ENCODE measurements at regions of chr10 and their contacts with region 1.

Region 1: DNA sequence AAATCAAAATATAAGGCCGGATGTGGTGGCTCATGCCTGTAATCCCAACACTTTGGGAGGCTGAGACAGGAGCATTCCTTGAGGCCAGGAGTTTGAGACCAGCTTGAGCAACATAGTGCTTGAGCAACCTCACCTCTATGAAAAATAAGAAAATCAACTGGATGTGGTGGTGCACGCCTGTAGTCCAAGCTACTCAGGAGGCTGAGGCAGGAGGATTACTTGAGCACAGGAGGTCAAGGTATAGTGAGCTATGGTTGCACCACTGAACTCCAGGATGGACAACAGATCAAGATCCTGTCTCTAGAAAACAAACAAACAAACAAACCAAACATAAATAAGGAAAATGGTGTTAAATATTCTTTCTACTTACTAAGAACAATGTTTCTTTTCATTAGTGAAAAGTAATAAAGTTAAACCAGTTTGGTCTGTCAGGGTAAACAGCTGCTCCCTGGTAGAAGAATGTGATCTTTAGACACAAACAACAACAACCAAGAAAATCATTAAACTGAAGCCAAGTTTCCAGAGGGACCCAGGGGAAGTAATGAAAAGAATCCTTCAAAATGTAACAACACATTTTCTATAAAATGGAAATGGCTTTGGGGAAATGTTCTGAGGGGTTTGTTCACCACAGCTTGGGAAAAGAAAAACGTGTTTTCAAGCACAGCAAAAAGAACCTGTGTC is 17.5 kb upstream of the BAG3 start:
- DNase-seq: no peak
- ATAC-seq: no peak
- H3K4me3 ChIP-seq: no peak overlapping the region
- H3K4me3 Mint-ChIP-seq: no peak overlapping the region
- H3K27ac ChIP-seq: no peak overlapping the region
- H3K27ac Mint-ChIP-seq: no peak overlapping the region
- H3K4me1 ChIP-seq: no peaks in the 10 kb centered on the region
- H3K4me1 Mint-ChIP-seq: no peaks in the 10 kb centered on the region
- H3K27me3 ChIP-seq: peaks cover 0 to 2% of the 10 kb centered on the region in 2 experiments
- H3K27me3 Mint-ChIP-seq: peaks cover 0 to 1% of the 10 kb centered on the region in 2 donors

Region 2: GRCh38 chr10:119620241-119621077 is 13.2 kb before region 1 on chr10:
- CTCF ChIA-PET with region 1: no interaction called
- POLR2A ChIA-PET with region 1: interaction called in 1 of 2 experiments, 12 read pairs
- DNase-seq: no peak
- ATAC-seq: peak in 1 of 4 experiments; percentile 12
- H3K4me3 ChIP-seq: no peak overlapping the region
- H3K4me3 Mint-ChIP-seq: no peak overlapping the region
- H3K27ac ChIP-seq: no peak overlapping the region
- H3K27ac Mint-ChIP-seq: peak overlapping the region in 1 of 2 donors; percentile 23
- H3K4me1 ChIP-seq: no peaks in the 10 kb centered on the region
- H3K4me1 Mint-ChIP-seq: peaks cover 0 to 6% (median 4%) of the 10 kb centered on the region in 3 donors
- H3K27me3 ChIP-seq: no peaks in the 10 kb centered on the region
- H3K27me3 Mint-ChIP-seq: peaks cover 0 to 4% of the 10 kb centered on the region in 2 donors

Region 3: DNA sequence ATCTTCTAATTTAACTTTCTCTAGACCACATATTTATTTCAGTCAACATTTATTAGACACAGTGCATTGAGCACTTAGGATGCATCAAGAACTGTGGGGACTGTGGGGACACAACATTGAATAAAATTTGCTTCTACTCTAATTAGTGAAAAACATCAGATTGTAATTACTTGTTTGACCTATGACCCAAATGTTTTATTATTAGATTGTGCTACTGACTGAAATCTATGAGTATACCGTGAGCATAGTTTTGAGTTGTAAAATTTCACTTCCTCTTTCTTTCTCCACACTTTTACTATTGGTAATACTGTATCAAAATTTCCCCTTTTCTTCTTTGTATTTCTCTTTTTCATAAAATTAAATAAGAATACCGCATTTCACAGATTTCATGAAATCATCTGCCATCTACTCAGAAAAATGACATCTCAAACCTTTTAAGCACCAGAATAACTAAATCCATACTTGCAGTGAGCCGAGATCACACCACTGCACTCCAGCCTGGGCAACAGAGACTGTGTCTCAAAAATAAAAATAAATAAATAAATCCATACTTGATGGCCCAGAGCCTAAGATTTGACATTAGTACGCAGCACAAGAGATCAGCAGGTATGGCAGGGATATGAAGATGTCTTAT is 66.8 kb after region 1 on chr10:
- CTCF ChIA-PET with region 1: no interaction called
- POLR2A ChIA-PET with region 1: no interaction called
- DNase-seq: no peak
- ATAC-seq: no peak
- H3K4me3 ChIP-seq: no peak overlapping the region
- H3K4me3 Mint-ChIP-seq: no peak overlapping the region
- H3K27ac ChIP-seq: no peak overlapping the region
- H3K27ac Mint-ChIP-seq: no peak overlapping the region
- H3K4me1 ChIP-seq: peaks cover 0 to 4% of the 10 kb centered on the region in 2 experiments
- H3K4me1 Mint-ChIP-seq: peaks cover 10 to 28% (median 14%) of the 10 kb centered on the region in 3 donors
- H3K27me3 ChIP-seq: peaks cover 0 to 5% of the 10 kb centered on the region in 2 experiments
- H3K27me3 Mint-ChIP-seq: peaks cover 0 to 3% of the 10 kb centered on the region in 2 donors

Region 4: DNA sequence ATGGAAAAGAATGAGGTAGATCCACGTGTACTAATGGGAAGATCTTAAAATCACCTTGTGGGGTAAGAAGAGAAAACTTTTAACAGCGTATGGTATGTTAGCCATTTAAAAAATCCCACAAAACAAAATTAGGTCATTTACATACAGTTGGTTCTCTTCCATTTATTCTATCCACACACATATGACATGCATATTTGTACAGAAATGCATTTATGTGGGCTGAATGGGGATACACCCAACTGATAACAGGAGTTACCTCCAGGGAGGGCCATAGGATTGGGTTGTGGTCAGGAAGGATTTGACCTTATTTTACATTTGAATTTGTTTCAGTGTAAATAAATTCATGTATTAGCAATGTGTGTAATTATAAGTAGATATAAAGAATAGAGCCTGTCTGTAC is 167.5 kb after region 1 on chr10:
- CTCF ChIA-PET with region 1: no interaction called
- POLR2A ChIA-PET with region 1: interaction called in 1 of 2 experiments, 10 read pairs
- DNase-seq: no peak
- ATAC-seq: no peak
- H3K4me3 ChIP-seq: no peak overlapping the region
- H3K4me3 Mint-ChIP-seq: no peak overlapping the region
- H3K27ac ChIP-seq: no peak overlapping the region
- H3K27ac Mint-ChIP-seq: no peak overlapping the region
- H3K4me1 ChIP-seq: no peaks in the 10 kb centered on the region
- H3K4me1 Mint-ChIP-seq: peaks cover 0 to 8% (median 6%) of the 10 kb centered on the region in 3 donors
- H3K27me3 ChIP-seq: no peaks in the 10 kb centered on the region
- H3K27me3 Mint-ChIP-seq: no peaks in the 10 kb centered on the region